ENCODE measurements at regions of chr2 and their contacts with region 1.

Region 1: DNA sequence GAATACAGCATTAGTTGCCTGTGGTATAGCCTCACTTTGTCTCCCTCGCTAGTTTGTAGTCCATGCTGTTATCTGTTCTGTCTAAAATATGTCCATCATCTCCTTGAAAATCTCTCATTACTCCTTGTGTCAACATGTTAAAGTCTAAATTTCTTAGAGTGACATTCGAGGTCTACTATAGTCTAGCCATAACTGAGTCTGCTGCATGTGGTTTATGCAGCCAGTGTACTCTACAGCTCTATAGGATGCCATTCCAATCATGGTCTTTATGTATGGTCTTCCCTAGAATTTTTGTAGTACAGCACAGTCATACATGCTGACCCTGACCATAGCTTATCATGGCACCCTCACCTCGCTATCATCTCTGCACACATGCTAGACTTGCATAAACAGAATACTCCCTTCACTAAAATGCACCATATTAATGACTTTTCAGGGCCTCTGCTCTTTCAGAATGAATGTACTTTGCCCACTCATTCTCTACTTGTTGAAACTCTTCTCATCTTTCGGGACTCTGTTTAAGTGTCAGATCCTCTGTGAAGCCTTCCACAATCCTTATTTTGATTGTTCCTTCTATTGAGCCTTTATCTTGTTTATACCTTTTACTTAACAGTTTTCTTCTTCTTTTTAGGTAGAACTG is 12.8 kb downstream of the TANK start:
- DNase-seq: no peak
- H3K4me3 Mint-ChIP-seq: peak overlapping the region; percentile 11
- H3K27ac Mint-ChIP-seq: peak overlapping the region; percentile 72
- H3K4me1 Mint-ChIP-seq: peaks cover 62% of the 10 kb centered on the region
- H3K27me3 Mint-ChIP-seq: no peaks in the 10 kb centered on the region

Region 2: GRCh38 chr2:161199912-161200701 is 27.1 kb after region 1 on chr2:
- intact Hi-C with region 1: loop called (anchors 2 kb)
- DNase-seq: no peak
- H3K4me3 Mint-ChIP-seq: no peak overlapping the region
- H3K27ac Mint-ChIP-seq: peak overlapping the region; percentile 42
- H3K4me1 Mint-ChIP-seq: peaks cover 25% of the 10 kb centered on the region
- H3K27me3 Mint-ChIP-seq: no peaks in the 10 kb centered on the region